ENCODE measurements at regions of chr1 and their contacts with region 1.

Region 1: GRCh38 chr1:101112051-101112780 is 86.6 kb upstream of the DPH5 start:
- DNase-seq: peak; percentile 84 to 91 (median 88)
- H3K4me3 ChIP-seq: peak overlapping the region in 1 of 2 donors; percentile 3
- H3K4me3 Mint-ChIP-seq: peak overlapping the region; percentile 52 to 87 (median 70)
- H3K27ac ChIP-seq: peak overlapping the region; percentile 60
- H3K27ac Mint-ChIP-seq: peak overlapping the region; percentile 91 to 100 (median 98)
- H3K4me1 ChIP-seq: peaks cover 42% of the 10 kb centered on the region
- H3K4me1 Mint-ChIP-seq: peaks cover 39 to 51% (median 47%) of the 10 kb centered on the region in 4 donors
- H3K27me3 ChIP-seq: no peaks in the 10 kb centered on the region
- H3K27me3 Mint-ChIP-seq: no peaks in the 10 kb centered on the region

Region 2: DNA sequence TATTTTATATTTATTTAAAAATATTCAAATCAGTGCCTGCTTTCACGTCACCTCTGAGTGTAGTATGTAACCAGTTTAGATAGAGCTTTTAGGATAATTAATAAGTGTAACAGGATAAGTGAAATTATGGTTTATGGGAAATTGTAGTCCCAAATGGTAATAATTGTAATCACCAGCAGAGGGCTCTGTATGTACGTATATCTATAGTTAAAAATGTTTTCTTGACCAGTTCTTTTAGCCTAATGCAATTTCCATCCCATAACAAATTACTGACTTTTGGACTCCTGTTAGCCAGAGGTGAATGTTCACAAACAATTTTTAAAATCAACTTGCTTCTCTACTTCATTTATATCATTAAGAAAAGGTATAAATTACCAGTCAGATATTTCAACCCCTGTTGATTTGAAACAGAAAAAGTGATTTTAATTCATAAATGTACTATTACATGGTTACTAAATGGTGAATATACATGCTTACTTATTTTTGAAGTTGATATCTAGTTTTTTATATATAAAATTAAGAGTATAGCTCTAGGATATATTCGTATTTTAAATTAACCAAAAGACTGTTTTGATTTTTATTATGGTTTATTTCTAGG is 191.0 kb before region 1 on chr1:
- CTCF ChIA-PET with region 1: interaction called, 5 read pairs
- POLR2A ChIA-PET with region 1: interaction called, 6 read pairs
- intact Hi-C with region 1: loop called (anchors 1 kb)
- DNase-seq: peak in 4 of 5 donors; percentile 48 to 66 (median 60)
- H3K4me3 ChIP-seq: no peak overlapping the region
- H3K4me3 Mint-ChIP-seq: peak overlapping the region in 3 of 8 donors; percentile 24 to 67 (median 39)
- H3K27ac ChIP-seq: no peak overlapping the region
- H3K27ac Mint-ChIP-seq: peak overlapping the region; percentile 61 to 91 (median 82)
- H3K4me1 ChIP-seq: peaks cover 39% of the 10 kb centered on the region
- H3K4me1 Mint-ChIP-seq: peaks cover 25 to 61% (median 38%) of the 10 kb centered on the region in 4 donors
- H3K27me3 ChIP-seq: no peaks in the 10 kb centered on the region
- H3K27me3 Mint-ChIP-seq: no peaks in the 10 kb centered on the region

Region 3: DNA sequence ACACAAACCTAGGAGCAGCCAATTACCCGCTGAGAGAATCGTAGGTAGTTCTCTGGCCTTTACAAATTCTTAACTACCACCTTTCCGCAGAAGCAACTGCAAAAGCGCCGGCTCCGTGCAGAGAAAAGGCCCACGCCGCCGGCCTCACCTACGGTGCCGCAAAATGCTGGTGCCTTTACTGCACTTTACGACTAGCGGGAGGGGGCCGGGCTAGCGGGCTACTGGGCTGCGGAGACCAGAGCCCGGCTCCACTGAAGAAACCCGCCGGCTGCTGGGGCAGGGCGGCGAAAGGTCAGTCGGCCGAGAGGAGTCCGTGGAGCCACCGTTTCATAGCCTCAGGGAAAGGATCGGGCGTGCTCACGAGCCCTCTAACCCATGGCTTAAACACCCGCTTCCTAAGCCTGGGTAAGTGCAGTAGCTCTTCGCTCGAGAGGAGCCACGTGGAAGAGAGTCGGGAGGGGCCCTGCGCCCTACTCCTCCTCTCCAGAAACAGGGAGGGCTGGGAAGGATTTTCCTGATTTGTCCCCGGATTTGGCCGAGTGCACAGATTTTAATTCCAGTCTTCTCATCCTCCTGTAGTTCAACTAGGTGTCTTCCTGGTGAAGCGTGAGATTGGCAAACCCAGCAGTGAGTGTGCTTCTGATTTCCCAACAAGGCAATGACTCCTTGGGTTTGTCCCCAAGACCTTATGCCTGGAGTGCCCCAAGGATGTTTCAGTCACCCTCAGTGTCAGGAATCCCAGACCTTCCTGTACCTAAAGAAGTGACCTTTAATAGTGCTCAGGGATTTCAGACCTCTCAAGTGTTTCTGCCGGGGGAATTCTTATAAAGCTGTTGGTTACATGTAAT is 86.3 kb before region 1 on chr1 and contains the start of gene DPH5:
- CTCF ChIA-PET with region 1: no interaction called
- POLR2A ChIA-PET with region 1: interaction called, 6 read pairs
- intact Hi-C with region 1: loop called (anchors 5 kb)
- DNase-seq: peak; percentile 86 to 91 (median 87)
- H3K4me3 ChIP-seq: peak within 1 kb of the TSS; percentile 78 to 88
- H3K4me3 Mint-ChIP-seq: peak within 1 kb of the TSS; percentile 85 to 99 (median 96)
- H3K27ac ChIP-seq: peak within 1 kb of the TSS; percentile 76
- H3K27ac Mint-ChIP-seq: peak within 1 kb of the TSS; percentile 96 to 99 (median 98)
- H3K4me1 ChIP-seq: peaks cover 62% of the 10 kb centered on the region
- H3K4me1 Mint-ChIP-seq: peaks cover 46 to 81% (median 61%) of the 10 kb centered on the region in 4 donors
- H3K27me3 ChIP-seq: no peaks in the 10 kb centered on the region
- H3K27me3 Mint-ChIP-seq: no peaks in the 10 kb centered on the region
- total RNA-seq, gene DPH5: 49.3 to 58.3 TPM

Region 4: GRCh38 chr1:101055623-101056022 is 56.6 kb before region 1 on chr1:
- CTCF ChIA-PET with region 1: no interaction called
- POLR2A ChIA-PET with region 1: no interaction called
- intact Hi-C with region 1: no loop called
- DNase-seq: no peak
- H3K4me3 ChIP-seq: no peak overlapping the region
- H3K4me3 Mint-ChIP-seq: no peak overlapping the region
- H3K27ac ChIP-seq: no peak overlapping the region
- H3K27ac Mint-ChIP-seq: peak overlapping the region in 1 of 7 donors; percentile 44
- H3K4me1 ChIP-seq: no peaks in the 10 kb centered on the region
- H3K4me1 Mint-ChIP-seq: peaks cover 11 to 18% (median 15%) of the 10 kb centered on the region in 4 donors
- H3K27me3 ChIP-seq: no peaks in the 10 kb centered on the region
- H3K27me3 Mint-ChIP-seq: no peaks in the 10 kb centered on the region

Region 5: GRCh38 chr1:101081496-101082488 is 30.4 kb before region 1 on chr1:
- CTCF ChIA-PET with region 1: interaction called, 3 read pairs
- POLR2A ChIA-PET with region 1: interaction called, 11 read pairs
- intact Hi-C with region 1: no loop called
- DNase-seq: peak in 4 of 5 donors; percentile 44 to 60 (median 51)
- H3K4me3 ChIP-seq: peak overlapping the region in 1 of 2 donors; percentile 19
- H3K4me3 Mint-ChIP-seq: peak overlapping the region; percentile 53 to 89 (median 80)
- H3K27ac ChIP-seq: no peak overlapping the region
- H3K27ac Mint-ChIP-seq: peak overlapping the region; percentile 88 to 95 (median 91)
- H3K4me1 ChIP-seq: peaks cover 35% of the 10 kb centered on the region
- H3K4me1 Mint-ChIP-seq: peaks cover 29 to 67% (median 40%) of the 10 kb centered on the region in 4 donors
- H3K27me3 ChIP-seq: no peaks in the 10 kb centered on the region
- H3K27me3 Mint-ChIP-seq: no peaks in the 10 kb centered on the region

Region 6: GRCh38 chr1:101136739-101137138 is 24.5 kb after region 1 on chr1:
- CTCF ChIA-PET with region 1: interaction called, 16 read pairs
- POLR2A ChIA-PET with region 1: interaction called, 21 read pairs
- intact Hi-C with region 1: loop called (anchors 1 kb)
- DNase-seq: peak in 3 of 5 donors; percentile 26 to 40 (median 32)
- H3K4me3 ChIP-seq: no peak overlapping the region
- H3K4me3 Mint-ChIP-seq: peak overlapping the region in 5 of 8 donors; percentile 26 to 67 (median 37)
- H3K27ac ChIP-seq: no peak overlapping the region
- H3K27ac Mint-ChIP-seq: peak overlapping the region; percentile 42 to 92 (median 77)
- H3K4me1 ChIP-seq: peaks cover 36% of the 10 kb centered on the region
- H3K4me1 Mint-ChIP-seq: peaks cover 32 to 57% (median 41%) of the 10 kb centered on the region in 4 donors
- H3K27me3 ChIP-seq: no peaks in the 10 kb centered on the region
- H3K27me3 Mint-ChIP-seq: no peaks in the 10 kb centered on the region